Aorta (tissue), 5 donors: ENCODE measurements at regions of chr10 and their contacts with region 1.

Region 1: DNA sequence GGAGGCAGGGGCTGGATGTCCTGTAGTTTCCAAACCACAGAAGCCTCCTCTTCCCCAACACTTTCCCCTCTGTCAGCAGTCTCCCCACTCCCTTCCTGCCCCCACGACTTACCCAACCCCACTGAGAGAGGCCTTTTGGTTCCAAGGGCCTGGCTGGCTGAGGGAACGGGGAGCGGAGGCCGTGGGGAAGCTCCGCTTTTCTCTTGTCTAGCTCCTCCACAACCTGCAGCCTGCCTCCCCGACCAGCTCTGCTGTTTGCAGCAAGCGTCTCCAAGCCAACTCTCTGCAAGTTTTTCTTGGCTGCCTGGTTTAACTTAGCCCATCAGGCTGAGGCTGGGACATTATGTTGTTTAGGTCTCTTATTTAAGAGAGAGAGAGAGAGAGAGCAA is 126.8 kb downstream of the NEURL1 start:
- DNase-seq: no peak
- ATAC-seq: no peak
- H3K4me3 ChIP-seq: no peak overlapping the region
- H3K27ac ChIP-seq: peak overlapping the region in 1 of 2 donors; percentile 85
- H3K4me1 ChIP-seq: peaks cover 4 to 5% of the 10 kb centered on the region in 2 donors
- H3K27me3 ChIP-seq: no peaks in the 10 kb centered on the region

Region 2: DNA sequence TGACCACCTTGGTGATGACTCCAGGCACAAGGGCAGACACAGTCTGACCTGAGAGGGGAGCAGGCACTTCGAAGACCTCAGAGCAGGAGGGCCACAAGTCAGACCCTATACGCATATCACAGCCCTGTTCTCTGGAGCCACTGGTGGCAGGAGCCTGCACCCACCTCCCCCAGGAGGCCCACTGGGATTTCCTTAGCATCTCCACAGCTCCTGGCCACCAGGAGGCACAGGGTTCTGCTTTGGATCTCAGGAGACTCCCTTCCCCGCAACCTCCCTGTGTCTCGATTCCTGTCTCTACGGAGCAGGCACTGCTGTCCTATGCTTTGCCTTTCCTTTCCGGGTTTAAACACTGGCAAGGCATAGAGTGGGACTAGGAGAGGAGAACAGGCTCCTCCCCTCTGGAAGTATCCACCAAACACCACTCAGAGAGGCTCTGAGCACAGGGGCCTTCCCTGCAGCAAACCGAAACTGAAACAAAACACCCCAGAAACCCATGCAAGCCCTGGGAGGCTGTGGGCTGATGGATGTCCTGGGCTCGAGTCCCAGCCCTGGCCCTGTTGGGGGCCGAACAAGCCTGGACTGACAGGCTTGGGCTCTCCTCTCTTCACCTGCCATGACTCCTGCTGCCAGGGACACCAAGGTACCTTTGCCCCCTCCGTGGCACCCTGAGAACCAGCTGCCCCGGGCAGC is 39.5 kb after region 1 on chr10:
- intact Hi-C with region 1: loop called (anchors 5 kb)
- DNase-seq: peak in 1 of 2 donors; percentile 82
- ATAC-seq: peak; percentile 81
- H3K4me3 ChIP-seq: peak overlapping the region; percentile 42 to 70
- H3K27ac ChIP-seq: peak overlapping the region in 1 of 2 donors; percentile 92
- H3K4me1 ChIP-seq: no peaks in the 10 kb centered on the region
- H3K27me3 ChIP-seq: no peaks in the 10 kb centered on the region